K562 (cell line): ENCODE measurements at regions of chr4 and their contacts with region 1.

Region 1: DNA sequence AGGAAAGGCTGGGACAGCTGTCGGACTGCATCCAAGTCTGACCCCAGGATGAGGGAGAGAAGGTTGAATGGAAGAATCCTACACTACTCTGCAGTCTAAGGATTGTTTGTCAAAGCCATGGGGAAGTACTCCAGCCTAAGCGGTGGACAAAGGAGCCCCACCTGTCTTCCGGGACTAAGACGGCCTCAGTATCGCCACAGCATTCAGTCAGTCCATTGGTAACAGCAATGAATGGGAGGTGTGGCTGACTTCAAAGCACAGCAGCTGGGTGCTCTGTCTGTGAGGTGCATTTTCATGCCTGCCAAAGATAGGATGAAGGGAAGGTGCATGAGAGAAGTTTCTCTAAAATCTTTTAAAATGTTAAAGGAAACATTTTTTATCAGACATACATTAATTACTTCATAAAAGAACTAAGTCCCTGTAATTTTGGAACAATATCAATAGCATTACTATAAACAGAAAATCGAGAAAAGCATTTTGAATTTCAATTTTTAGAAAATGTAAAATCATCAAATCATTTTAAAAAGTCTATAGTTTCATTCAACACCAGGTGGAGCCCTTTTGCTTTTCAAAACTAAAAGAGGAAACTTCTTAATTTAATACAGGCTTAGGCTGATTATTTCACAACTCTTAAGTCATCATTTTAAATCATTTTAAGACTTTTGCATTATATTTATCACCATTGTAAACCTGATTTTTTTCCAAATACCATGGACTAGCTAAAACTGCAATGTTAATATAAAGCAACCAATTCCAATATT is 27.6 kb upstream of the INTU start:
- DNase-seq: peak in 3 of 4 experiments; percentile 13 to 38 (median 17)
- ATAC-seq: peak; percentile 56
- H3K4me3 ChIP-seq: no peak overlapping the region
- H3K27ac ChIP-seq: no peak overlapping the region
- H3K4me1 ChIP-seq: no peaks in the 10 kb centered on the region
- H3K27me3 ChIP-seq: no peaks in the 10 kb centered on the region
- CTCF ChIP-seq: peak in 2 of 3 experiments; percentile 28 to 76; a peak in 3 of 6 replicates
- EP300 ChIP-seq: no peak
- POLR2A ChIP-seq: no peak
- RAD21 ChIP-seq: peak; percentile 72 to 85

Region 2: GRCh38 chr4:127698789-127699200 is 93.7 kb after region 1 on chr4:
- CTCF ChIA-PET with region 1: no interaction called
- POLR2A ChIA-PET with region 1: no interaction called
- in situ Hi-C with region 1: no loop called
- intact Hi-C with region 1: no loop called
- DNase-seq: no peak
- ATAC-seq: no peak
- H3K4me3 ChIP-seq: no peak overlapping the region
- H3K27ac ChIP-seq: no peak overlapping the region
- H3K4me1 ChIP-seq: no peaks in the 10 kb centered on the region
- H3K27me3 ChIP-seq: no peaks in the 10 kb centered on the region
- CTCF ChIP-seq: no peak
- EP300 ChIP-seq: no peak
- POLR2A ChIP-seq: no peak
- RAD21 ChIP-seq: no peak

Region 3: GRCh38 chr4:127732613-127733328 is 127.6 kb after region 1 on chr4:
- CTCF ChIA-PET with region 1: interaction called, 32 read pairs
- POLR2A ChIA-PET with region 1: no interaction called
- in situ Hi-C with region 1: no loop called
- intact Hi-C with region 1: loop called (anchors 1 kb)
- DNase-seq: peak in 2 of 4 experiments; percentile 42 to 43
- ATAC-seq: peak; percentile 86
- H3K4me3 ChIP-seq: no peak overlapping the region
- H3K27ac ChIP-seq: no peak overlapping the region
- H3K4me1 ChIP-seq: no peaks in the 10 kb centered on the region; a peak in 3 of 5 replicates
- H3K27me3 ChIP-seq: no peaks in the 10 kb centered on the region
- CTCF ChIP-seq: peak; percentile 38 to 76 (median 47); a peak in 4 of 6 replicates
- EP300 ChIP-seq: no peak
- POLR2A ChIP-seq: no peak
- RAD21 ChIP-seq: peak; percentile 63 to 81

Region 4: DNA sequence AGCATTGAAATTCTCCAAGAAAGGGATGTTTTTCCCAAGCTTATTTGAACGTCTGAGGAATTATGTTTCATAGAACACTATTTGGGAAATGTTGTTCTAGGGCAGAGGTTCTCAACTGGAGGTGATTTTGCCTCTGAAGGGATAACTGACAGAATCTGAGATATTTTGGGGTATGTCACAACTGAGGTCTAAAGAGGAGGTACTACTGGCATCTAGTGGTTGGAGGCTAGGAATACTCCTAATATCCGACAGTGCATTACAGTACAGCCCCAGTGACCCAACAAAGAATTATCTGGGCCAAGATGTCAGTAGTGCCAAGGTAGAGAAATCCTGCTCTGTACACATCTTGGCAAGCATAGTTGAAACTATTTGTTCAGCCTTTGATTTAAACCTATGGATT is 183.4 kb after region 1 on chr4:
- CTCF ChIA-PET with region 1: no interaction called
- POLR2A ChIA-PET with region 1: no interaction called
- in situ Hi-C with region 1: no loop called
- intact Hi-C with region 1: loop called (anchors 1 kb)
- DNase-seq: peak in 2 of 4 experiments; percentile 28 to 34
- ATAC-seq: peak; percentile 69
- H3K4me3 ChIP-seq: no peak overlapping the region
- H3K27ac ChIP-seq: no peak overlapping the region
- H3K4me1 ChIP-seq: no peaks in the 10 kb centered on the region
- H3K27me3 ChIP-seq: no peaks in the 10 kb centered on the region
- CTCF ChIP-seq: peak; percentile 39 to 47 (median 44)
- EP300 ChIP-seq: no peak
- POLR2A ChIP-seq: no peak
- RAD21 ChIP-seq: peak in 1 of 2 experiments; percentile 33; a peak in 2 of 4 replicates

Region 5: DNA sequence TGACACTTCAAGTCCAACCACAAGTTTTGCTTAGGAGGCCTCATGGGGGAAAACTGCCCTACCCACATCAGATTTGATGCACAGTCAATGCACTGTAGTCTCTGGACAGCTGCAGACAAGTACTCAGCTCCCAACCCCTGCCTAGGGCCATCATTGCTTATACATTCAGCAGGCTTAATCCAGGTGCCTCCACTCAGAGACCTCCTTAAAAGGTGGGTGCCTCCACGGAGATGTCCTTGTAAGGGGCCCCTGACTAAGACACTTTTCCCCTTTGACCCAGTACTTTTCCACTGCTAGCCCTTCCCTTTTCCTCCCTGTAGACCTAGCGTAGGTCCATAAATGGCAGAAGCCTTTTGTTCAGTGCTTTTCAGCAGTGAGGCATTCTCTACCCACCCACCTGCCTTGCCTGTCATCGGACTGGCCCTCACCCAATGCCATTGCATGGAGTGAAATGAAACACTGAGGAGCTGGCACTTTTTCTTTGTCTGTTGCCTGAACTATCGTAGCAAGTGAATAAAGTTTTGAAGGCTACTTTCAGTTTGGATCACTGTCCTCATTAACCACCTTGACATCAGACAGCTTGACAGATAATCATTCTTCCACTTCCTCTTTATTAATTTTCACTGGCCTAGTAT is 251.8 kb after region 1 on chr4:
- CTCF ChIA-PET with region 1: no interaction called
- POLR2A ChIA-PET with region 1: no interaction called
- in situ Hi-C with region 1: no loop called
- intact Hi-C with region 1: no loop called
- DNase-seq: no peak
- ATAC-seq: no peak; the same call in 2 of the 3 replicates
- H3K4me3 ChIP-seq: no peak overlapping the region
- H3K27ac ChIP-seq: no peak overlapping the region
- H3K4me1 ChIP-seq: no peaks in the 10 kb centered on the region; a peak in 1 of 5 replicates
- H3K27me3 ChIP-seq: no peaks in the 10 kb centered on the region
- CTCF ChIP-seq: no peak
- EP300 ChIP-seq: no peak
- POLR2A ChIP-seq: no peak
- RAD21 ChIP-seq: no peak